Activated CD8-positive, alpha-beta T cell treated with anti-CD3 and anti-CD28 coated beads for 36 hours (primary cell): ENCODE measurements at regions of chr1 and their contacts with region 1.

Region 1: DNA sequence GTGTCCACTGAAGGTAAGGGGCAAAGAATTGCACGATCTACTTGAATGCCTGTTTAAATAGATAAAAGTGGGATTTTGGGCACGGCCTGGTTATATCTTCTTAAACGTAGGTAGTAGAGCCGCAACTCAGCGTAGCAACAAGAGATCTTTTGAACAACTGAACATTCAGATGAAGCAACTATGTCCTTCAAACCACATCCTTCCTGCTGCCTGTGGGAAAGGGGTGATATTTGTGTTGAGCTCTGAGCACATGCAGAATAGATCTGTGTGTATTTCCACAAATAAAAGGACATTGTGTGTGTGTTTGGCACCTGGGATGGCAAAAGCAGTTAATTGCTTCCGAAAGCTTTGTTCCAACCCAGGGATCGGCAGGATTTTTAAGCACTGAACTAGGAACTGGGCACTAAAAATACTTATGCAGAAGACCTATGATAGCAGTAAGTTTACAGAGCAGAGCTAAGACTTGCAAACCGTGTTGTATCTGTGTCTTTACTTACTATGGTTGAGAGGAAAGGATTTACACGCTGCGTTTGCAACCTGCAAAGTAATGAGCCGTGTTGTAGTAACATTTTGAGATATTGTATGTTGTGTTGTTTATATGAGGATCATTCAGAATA is 333.4 kb downstream of the CHRM3 start:
- DNase-seq: peak; percentile 81
- ATAC-seq: peak; percentile 63
- H3K4me3 Mint-ChIP-seq: no peak overlapping the region
- H3K27ac Mint-ChIP-seq: peak overlapping the region; percentile 96
- H3K4me1 Mint-ChIP-seq: peaks cover 37% of the 10 kb centered on the region
- H3K27me3 Mint-ChIP-seq: no peaks in the 10 kb centered on the region
- CTCF ChIP-seq: no peak

Region 2: GRCh38 chr1:239426821-239427475 is 292.8 kb before region 1 on chr1:
- CTCF ChIA-PET with region 1: no interaction called
- POLR2A ChIA-PET with region 1: no interaction called
- intact Hi-C with region 1: no loop called
- DNase-seq: no peak
- ATAC-seq: no peak
- H3K4me3 Mint-ChIP-seq: no peak overlapping the region
- H3K27ac Mint-ChIP-seq: no peak overlapping the region
- H3K4me1 Mint-ChIP-seq: no peaks in the 10 kb centered on the region
- H3K27me3 Mint-ChIP-seq: peaks cover 4% of the 10 kb centered on the region
- CTCF ChIP-seq: no peak

Region 3: DNA sequence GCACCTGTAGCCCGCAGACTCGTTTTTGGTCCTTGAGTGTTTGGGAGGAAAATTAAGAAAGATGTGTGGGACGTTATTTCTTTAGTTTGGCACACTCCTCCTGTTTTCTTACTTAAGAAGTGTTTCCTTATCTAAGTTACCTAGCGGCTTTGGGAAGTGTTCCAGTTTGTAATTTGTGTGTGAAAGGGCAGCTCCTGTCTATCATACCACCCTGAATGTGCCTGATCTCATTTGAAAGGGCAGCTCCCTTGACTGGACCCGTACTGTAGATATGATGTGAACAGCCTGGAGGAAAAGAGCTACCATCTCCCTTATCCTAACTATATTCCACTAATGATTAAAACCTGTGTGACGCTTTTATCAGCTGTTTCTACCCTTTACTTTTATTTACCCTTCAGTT is 19.1 kb before region 1 on chr1:
- CTCF ChIA-PET with region 1: interaction called, 4 read pairs
- POLR2A ChIA-PET with region 1: interaction called, 21 read pairs
- intact Hi-C with region 1: no loop called
- DNase-seq: no peak
- ATAC-seq: no peak
- H3K4me3 Mint-ChIP-seq: no peak overlapping the region
- H3K27ac Mint-ChIP-seq: no peak overlapping the region
- H3K4me1 Mint-ChIP-seq: peaks cover 2% of the 10 kb centered on the region
- H3K27me3 Mint-ChIP-seq: no peaks in the 10 kb centered on the region
- CTCF ChIP-seq: no peak

Region 4: DNA sequence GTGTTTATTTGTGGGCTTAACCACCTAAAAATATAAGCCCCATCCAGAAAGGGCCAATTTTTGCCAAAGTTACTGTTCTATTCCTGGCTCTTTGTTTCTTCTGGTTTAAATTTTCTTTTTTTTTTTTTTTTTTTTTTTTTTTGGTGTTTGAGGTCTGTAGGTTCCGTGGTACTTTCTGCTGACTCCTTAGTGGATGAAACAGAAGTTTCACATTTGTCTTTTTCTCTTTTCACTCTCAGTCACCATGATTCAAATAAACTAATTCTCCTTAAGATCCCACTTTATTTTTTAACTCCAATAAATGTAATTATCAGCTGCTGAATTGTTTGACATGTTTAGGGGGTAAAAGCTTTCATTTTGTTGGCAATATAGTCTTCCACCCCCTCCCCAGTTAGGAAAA is 11.1 kb before region 1 on chr1:
- CTCF ChIA-PET with region 1: interaction called, 5 read pairs
- POLR2A ChIA-PET with region 1: interaction called, 24 read pairs
- intact Hi-C with region 1: no loop called
- DNase-seq: no peak
- ATAC-seq: no peak
- H3K4me3 Mint-ChIP-seq: no peak overlapping the region
- H3K27ac Mint-ChIP-seq: no peak overlapping the region
- H3K4me1 Mint-ChIP-seq: peaks cover 27% of the 10 kb centered on the region
- H3K27me3 Mint-ChIP-seq: no peaks in the 10 kb centered on the region
- CTCF ChIP-seq: no peak

Region 5: DNA sequence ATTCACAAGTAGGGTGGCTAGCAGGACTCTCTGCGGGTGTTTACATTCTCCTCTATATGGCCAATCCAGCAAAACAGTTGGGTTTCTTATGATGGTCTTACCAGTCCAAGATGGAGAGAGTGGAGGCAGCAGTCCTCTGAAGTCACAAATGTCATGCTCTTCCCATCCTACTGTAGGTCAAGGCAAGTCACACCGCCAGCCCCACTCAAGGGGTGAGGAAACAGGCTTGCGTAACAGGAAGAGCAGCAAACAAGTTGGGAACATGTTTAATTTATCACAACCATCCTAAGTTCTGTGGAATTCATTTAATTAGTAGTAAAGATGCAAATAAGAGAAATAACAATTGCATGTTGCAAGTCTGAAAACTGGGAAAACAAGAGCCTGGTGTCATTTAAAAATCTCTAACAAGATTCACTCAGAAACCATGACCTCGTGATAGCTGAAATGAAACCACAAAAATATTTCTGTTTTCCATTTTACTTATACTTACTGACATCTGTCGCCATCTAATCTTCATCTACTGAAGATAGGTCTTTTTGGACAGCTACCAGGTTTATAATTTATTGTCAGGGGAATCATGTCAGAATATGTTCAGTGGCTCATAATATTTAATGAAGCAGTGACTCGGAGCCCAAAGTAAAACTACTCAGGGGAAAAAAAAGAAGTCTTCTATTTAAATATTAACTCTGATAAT is 22.8 kb after region 1 on chr1:
- CTCF ChIA-PET with region 1: no interaction called
- POLR2A ChIA-PET with region 1: no interaction called
- intact Hi-C with region 1: no loop called
- DNase-seq: no peak
- ATAC-seq: no peak
- H3K4me3 Mint-ChIP-seq: no peak overlapping the region
- H3K27ac Mint-ChIP-seq: no peak overlapping the region
- H3K4me1 Mint-ChIP-seq: peaks cover 13% of the 10 kb centered on the region
- H3K27me3 Mint-ChIP-seq: no peaks in the 10 kb centered on the region
- CTCF ChIP-seq: no peak

Region 6: DNA sequence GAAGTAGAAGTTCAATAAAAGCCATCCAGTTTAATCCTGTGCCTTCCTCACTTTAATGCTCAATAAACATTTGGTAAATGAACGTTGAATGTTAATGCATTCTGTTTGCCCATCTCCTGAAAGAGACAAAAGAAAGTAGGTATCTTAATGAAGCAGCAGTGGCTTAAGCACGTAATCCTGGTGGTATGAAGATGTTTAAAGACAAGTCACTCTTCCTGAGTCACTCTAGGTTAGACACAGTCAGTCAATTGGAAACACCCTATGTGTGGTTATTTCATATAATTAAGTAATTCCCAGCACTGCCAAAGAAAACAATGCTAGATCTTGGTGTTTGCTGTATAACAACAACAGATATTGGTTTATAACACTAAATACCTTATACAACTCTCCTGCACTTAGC is 38.0 kb after region 1 on chr1:
- CTCF ChIA-PET with region 1: no interaction called
- POLR2A ChIA-PET with region 1: no interaction called
- intact Hi-C with region 1: no loop called
- DNase-seq: no peak
- ATAC-seq: no peak
- H3K4me3 Mint-ChIP-seq: no peak overlapping the region
- H3K27ac Mint-ChIP-seq: no peak overlapping the region
- H3K4me1 Mint-ChIP-seq: no peaks in the 10 kb centered on the region
- H3K27me3 Mint-ChIP-seq: no peaks in the 10 kb centered on the region
- CTCF ChIP-seq: no peak

Region 7: DNA sequence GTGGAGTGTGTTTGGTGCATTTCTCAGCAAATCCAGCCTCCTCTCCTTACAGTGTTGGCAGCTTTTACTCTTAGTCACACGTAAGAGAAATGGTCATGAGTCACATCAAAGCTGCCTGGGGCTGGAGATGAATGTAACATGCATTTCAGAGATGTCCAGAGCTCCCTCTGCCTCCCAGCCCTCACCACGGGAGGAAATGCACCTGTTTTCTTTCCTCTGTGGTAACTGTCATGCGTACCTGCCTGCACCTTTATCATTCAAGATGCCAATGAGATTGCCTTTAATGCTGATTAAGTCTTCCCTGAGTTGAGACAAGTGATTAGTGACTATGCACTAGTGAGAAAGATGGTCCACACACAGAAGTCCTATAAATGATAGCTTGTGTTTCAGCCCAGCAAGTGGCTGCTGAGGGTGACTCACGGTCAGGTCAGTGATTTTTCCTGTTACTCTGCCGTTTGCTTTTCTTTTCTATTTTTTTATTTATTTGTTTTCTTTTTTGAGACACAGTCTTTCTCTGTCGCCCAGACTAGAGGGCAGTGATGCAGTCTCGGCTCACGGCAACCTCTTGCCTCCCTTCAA is 94.6 kb after region 1 on chr1:
- CTCF ChIA-PET with region 1: interaction called, 16 read pairs
- POLR2A ChIA-PET with region 1: no interaction called
- intact Hi-C with region 1: loop called (anchors 5 kb)
- DNase-seq: peak; percentile 56
- ATAC-seq: peak; percentile 81
- H3K4me3 Mint-ChIP-seq: no peak overlapping the region
- H3K27ac Mint-ChIP-seq: no peak overlapping the region
- H3K4me1 Mint-ChIP-seq: peaks cover 24% of the 10 kb centered on the region
- H3K27me3 Mint-ChIP-seq: no peaks in the 10 kb centered on the region
- CTCF ChIP-seq: no peak

Region 8: GRCh38 chr1:239898062-239898730 is 178.4 kb after region 1 on chr1:
- CTCF ChIA-PET with region 1: interaction called, 5 read pairs
- POLR2A ChIA-PET with region 1: no interaction called
- intact Hi-C with region 1: loop called (anchors 2 kb)
- DNase-seq: peak; percentile 85
- ATAC-seq: peak; percentile 97
- H3K4me3 Mint-ChIP-seq: no peak overlapping the region
- H3K27ac Mint-ChIP-seq: no peak overlapping the region
- H3K4me1 Mint-ChIP-seq: peaks cover 4% of the 10 kb centered on the region
- H3K27me3 Mint-ChIP-seq: peaks cover 4% of the 10 kb centered on the region
- CTCF ChIP-seq: peak; percentile 89